Common myeloid progenitor, CD34-positive (primary cell): ENCODE measurements at regions of chr22 and their contacts with region 1.

Region 1: GRCh38 chr22:17742527-17742902 is 31.8 kb downstream of the BID start:
- DNase-seq: peak; percentile 61 to 81 (median 78)
- H3K4me3 ChIP-seq: no peak overlapping the region
- H3K27ac ChIP-seq: peak overlapping the region in 1 of 2 experiments; percentile 2
- H3K4me1 ChIP-seq: peaks cover 0 to 3% (median 0%) of the 10 kb centered on the region in 4 experiments
- H3K27me3 ChIP-seq: no peaks in the 10 kb centered on the region

Region 2: DNA sequence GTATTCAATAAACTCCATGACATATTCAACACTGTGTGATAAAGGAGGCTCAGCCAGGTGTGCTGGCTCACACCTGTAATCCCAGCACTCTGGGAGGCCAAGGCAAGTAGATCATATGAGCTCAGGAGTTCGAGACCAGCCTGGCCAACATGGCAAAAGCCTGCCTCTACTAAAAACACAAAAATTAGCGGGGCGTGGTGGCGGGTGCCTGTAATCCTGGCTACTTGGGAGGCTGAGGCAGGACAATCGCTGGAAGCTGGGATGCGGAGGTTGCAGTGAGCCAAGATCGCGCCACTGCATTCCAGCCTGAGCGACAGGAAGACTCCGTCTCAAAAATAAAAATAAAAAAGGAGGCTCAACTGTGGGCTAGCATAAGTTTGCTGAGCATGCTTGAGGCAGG is 183.3 kb before region 1 on chr22:
- CTCF ChIA-PET with region 1: interaction called, 15 read pairs
- POLR2A ChIA-PET with region 1: no interaction called
- DNase-seq: no peak
- H3K4me3 ChIP-seq: no peak overlapping the region
- H3K27ac ChIP-seq: no peak overlapping the region
- H3K4me1 ChIP-seq: peaks cover 0 to 5% (median 0%) of the 10 kb centered on the region in 4 experiments
- H3K27me3 ChIP-seq: peaks cover 0 to 3% (median 0%) of the 10 kb centered on the region in 5 experiments

Region 3: DNA sequence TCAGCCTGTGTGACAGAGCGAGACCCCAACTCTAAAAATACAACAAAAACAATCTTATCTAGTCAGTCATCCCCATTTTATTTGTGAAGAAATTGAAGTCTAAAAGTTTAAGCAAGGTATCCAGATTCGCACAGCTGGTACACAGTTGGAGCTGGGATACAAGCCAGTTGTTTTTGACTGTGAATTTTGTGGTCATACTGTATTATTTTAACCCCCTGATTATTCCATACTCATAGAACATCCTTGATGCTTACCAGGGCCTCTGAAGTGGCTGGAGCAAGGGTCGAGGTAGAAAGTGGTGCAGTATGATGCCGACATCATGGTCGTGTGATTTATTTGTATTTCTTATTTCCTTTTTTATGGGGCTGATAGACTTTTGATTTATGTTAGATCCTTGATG is 18.3 kb before region 1 on chr22:
- CTCF ChIA-PET with region 1: interaction called, 16 read pairs
- POLR2A ChIA-PET with region 1: interaction called, 3 read pairs
- DNase-seq: no peak
- H3K4me3 ChIP-seq: no peak overlapping the region
- H3K27ac ChIP-seq: no peak overlapping the region
- H3K4me1 ChIP-seq: peaks cover 7 to 20% (median 14%) of the 10 kb centered on the region in 4 experiments
- H3K27me3 ChIP-seq: no peaks in the 10 kb centered on the region

Region 4: GRCh38 chr22:17754233-17754925 is 11.9 kb after region 1 on chr22:
- CTCF ChIA-PET with region 1: interaction called, 21 read pairs
- POLR2A ChIA-PET with region 1: no interaction called
- DNase-seq: peak; percentile 38 to 65 (median 64)
- H3K4me3 ChIP-seq: no peak overlapping the region
- H3K27ac ChIP-seq: no peak overlapping the region
- H3K4me1 ChIP-seq: no peaks in the 10 kb centered on the region
- H3K27me3 ChIP-seq: no peaks in the 10 kb centered on the region

Region 5: GRCh38 chr22:17773606-17774205 is 31.2 kb after region 1 on chr22:
- CTCF ChIA-PET with region 1: interaction called, 23 read pairs
- POLR2A ChIA-PET with region 1: interaction called, 3 read pairs
- DNase-seq: peak; percentile 27 to 72 (median 59)
- H3K4me3 ChIP-seq: peak overlapping the region; percentile 59 to 80 (median 76)
- H3K27ac ChIP-seq: peak overlapping the region in 1 of 2 experiments; percentile 64
- H3K4me1 ChIP-seq: peaks cover 4 to 87% (median 75%) of the 10 kb centered on the region in 4 experiments
- H3K27me3 ChIP-seq: no peaks in the 10 kb centered on the region

Region 6: GRCh38 chr22:17785185-17786184 is 43.0 kb after region 1 on chr22:
- CTCF ChIA-PET with region 1: interaction called, 139 read pairs
- POLR2A ChIA-PET with region 1: no interaction called
- DNase-seq: peak; percentile 53 to 76 (median 65)
- H3K4me3 ChIP-seq: no peak overlapping the region
- H3K27ac ChIP-seq: peak overlapping the region in 1 of 2 experiments; percentile 14
- H3K4me1 ChIP-seq: peaks cover 0 to 40% (median 34%) of the 10 kb centered on the region in 4 experiments
- H3K27me3 ChIP-seq: no peaks in the 10 kb centered on the region

Region 7: GRCh38 chr22:18077639-18078328 is 335.3 kb after region 1 on chr22 and contains the start of gene PEX26:
- CTCF ChIA-PET with region 1: interaction called, 14 read pairs
- POLR2A ChIA-PET with region 1: no interaction called
- DNase-seq: peak; percentile 97 to 99 (median 98)
- H3K4me3 ChIP-seq: peak within 1 kb of the TSS; percentile 74 to 100 (median 99)
- H3K27ac ChIP-seq: peak within 1 kb of the TSS; percentile 78 to 86
- H3K4me1 ChIP-seq: peaks cover 9 to 29% (median 23%) of the 10 kb centered on the region in 4 experiments
- H3K27me3 ChIP-seq: no peaks in the 10 kb centered on the region